ENCODE measurements at regions of chr17 and their contacts with region 1.

Region 1: DNA sequence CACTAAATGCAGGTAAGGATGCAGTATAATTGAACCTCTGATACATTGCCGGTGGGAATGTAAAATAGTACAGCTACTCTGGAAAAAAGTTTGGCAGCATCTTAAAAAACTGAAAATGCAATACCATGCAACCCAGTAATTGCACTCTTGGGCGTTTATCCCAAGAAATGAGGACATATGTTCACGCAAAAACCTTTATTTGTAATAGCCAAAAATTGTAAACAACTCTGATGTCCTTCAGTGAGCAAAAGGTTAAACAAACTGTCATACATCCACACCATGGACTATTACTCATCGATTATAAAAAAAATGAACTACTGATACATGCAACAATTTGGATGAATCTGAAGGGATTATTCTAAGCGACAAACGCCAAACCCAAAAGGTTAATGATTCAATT is 16.9 kb downstream of the SYNRG start:
- DNase-seq: peak; percentile 15
- ATAC-seq: no peak
- H3K4me3 ChIP-seq: no peak overlapping the region
- H3K27ac ChIP-seq: no peak overlapping the region
- H3K4me1 ChIP-seq: no peaks in the 10 kb centered on the region
- H3K27me3 ChIP-seq: no peaks in the 10 kb centered on the region
- CTCF ChIP-seq: no peak
- POLR2A ChIP-seq: no peak
- RAD21 ChIP-seq: no peak

Region 2: GRCh38 chr17:37541880-37542660 is 50.2 kb before region 1 on chr17:
- CTCF ChIA-PET with region 1: no interaction called
- POLR2A ChIA-PET with region 1: no interaction called
- dilution Hi-C with region 1: no loop called
- in situ Hi-C with region 1: no loop called
- intact Hi-C with region 1: loop called (anchors 10 kb)
- DNase-seq: peak; percentile 83
- ATAC-seq: peak; percentile 83
- H3K4me3 ChIP-seq: no peak overlapping the region
- H3K27ac ChIP-seq: peak overlapping the region; percentile 34; the same call in 1 of the 2 replicates
- H3K4me1 ChIP-seq: no peaks in the 10 kb centered on the region
- H3K27me3 ChIP-seq: no peaks in the 10 kb centered on the region
- CTCF ChIP-seq: no peak
- POLR2A ChIP-seq: no peak
- RAD21 ChIP-seq: no peak

Measured in IMR-90 (cell line).